Transverse colon (tissue), 4 donors: ENCODE measurements at regions of chr19 and their contacts with region 1.

Region 1: DNA sequence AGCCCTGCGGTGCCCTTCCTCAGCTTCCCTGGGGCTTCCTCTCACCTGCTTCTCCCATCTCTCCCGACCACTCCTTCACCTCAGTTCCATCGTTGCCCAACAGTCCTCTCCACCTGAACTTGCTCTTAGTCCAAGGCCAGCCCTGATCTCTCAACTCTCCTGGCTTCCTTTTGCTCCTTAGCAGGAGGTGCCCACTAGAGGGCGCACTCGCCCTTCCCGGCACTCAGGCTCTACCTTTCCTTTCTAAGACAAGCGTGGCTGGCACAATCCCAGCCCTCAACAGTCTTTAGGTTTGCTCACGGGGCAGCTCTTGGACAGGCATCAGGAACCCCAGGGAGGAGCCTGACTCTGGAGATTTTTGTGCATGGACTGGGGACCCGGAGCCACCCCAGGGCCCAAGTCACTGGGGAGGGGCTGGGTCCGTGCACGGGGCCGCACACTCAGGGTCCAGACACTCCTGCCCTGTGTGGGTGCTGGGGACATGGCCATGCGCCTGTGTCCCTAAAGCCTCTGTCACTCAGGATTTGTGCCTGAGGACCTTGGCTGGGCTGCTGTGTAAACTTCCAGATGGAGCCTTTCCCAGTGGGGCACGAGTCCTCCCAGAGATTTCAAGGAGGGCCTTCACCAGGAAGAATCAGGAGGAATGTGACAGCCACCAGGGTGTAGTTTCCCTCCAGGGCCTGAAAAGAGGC is 12.1 kb upstream of the CEACAM8 start:
- DNase-seq: peak; percentile 73
- H3K4me3 ChIP-seq: no peak overlapping the region
- H3K27ac ChIP-seq: no peak overlapping the region
- H3K4me1 ChIP-seq: no peaks in the 10 kb centered on the region
- H3K27me3 ChIP-seq: peaks cover 21% of the 10 kb centered on the region
- CTCF ChIP-seq: peak; percentile 34 to 70 (median 60)
- EP300 ChIP-seq: no peak
- POLR2A ChIP-seq: no peak

Region 2: GRCh38 chr19:42553292-42554045 is 53.3 kb before region 1 on chr19:
- in situ Hi-C with region 1: loop called in 1 of 4 experiments (anchors 10 kb)
- intact Hi-C with region 1: no loop called
- DNase-seq: no peak
- H3K4me3 ChIP-seq: no peak overlapping the region
- H3K27ac ChIP-seq: no peak overlapping the region
- H3K4me1 ChIP-seq: peaks cover 0 to 3% (median 0%) of the 10 kb centered on the region in 4 donors
- H3K27me3 ChIP-seq: no peaks in the 10 kb centered on the region
- CTCF ChIP-seq: no peak
- EP300 ChIP-seq: no peak
- POLR2A ChIP-seq: no peak

Region 3: DNA sequence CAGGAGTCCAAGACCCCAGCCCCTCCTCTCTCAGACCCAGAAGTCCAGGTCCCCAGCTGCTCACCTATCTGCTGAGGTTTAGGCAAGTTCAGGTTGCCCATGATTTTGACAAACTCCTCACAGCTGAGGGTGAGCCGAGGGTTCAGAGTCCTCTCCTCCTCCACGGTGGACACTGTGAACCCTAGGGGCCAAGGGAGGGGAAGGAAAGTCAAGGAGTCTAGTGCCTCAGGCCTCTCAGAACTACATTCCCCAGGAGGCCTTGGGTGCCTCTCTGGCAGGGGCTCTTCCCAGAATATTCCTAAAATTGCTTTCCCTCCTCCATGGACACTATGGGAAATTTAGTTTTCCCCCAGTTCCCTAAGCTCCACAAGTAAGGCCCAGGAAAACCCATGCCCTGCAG is 901.1 kb after region 1 on chr19:
- in situ Hi-C with region 1: no loop called
- intact Hi-C with region 1: no loop called
- DNase-seq: no peak
- H3K4me3 ChIP-seq: no peak overlapping the region
- H3K27ac ChIP-seq: no peak overlapping the region
- H3K4me1 ChIP-seq: peaks cover 8 to 16% (median 12%) of the 10 kb centered on the region in 4 donors
- H3K27me3 ChIP-seq: no peaks in the 10 kb centered on the region
- CTCF ChIP-seq: no peak
- EP300 ChIP-seq: no peak
- POLR2A ChIP-seq: no peak